Activated naive CD4-positive, alpha-beta T cell treated with anti-CD3 and anti-CD28 coated beads for 36 hours (primary cell): ENCODE measurements at regions of chr1 and their contacts with region 1.

Region 1: DNA sequence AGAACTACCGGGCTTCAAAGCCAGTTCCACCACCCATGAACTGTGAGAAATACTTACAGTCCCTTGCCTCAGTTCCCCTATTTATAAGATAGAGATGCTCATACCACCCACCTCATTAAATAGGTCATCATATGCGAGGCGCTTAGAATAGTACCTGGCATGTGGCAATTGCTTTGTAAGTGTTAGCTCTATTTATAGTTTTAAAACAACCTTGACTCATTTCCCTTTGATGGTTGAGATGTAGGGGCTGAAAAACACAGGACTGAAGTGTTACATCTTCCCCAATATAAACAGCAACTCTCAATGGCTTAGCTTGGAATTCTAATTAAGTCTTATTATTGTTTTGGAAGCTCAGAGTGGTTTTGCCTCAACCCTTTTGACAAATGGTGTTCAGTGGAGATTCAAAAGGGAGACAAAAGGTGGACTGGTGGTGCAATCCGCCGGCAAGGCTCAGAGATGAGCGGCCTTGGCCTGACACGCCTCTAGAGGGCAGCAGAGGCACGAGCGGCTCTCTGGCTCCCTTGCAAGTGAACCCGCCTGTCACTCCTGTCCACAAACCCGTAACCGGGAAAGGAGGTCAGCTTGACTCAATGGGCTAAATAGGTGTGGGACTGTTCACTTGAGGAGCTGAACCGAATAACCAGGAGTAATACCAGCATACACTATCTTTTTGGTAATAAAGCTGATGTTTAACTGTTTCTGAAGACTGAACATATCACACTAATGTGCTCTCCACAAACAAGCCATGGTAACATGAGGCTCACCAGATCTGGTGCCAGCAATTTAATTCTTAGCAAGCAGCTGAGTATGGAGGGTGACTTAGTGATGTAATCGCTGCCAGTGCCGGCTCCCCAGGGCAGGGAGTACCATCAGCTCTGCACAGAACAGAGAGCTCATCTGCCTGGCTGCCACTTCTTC is 19.5 kb upstream of the SMYD2 start:
- DNase-seq: peak; percentile 91
- H3K4me3 Mint-ChIP-seq: no peak overlapping the region
- H3K27ac Mint-ChIP-seq: no peak overlapping the region
- H3K4me1 Mint-ChIP-seq: peaks cover 11% of the 10 kb centered on the region
- H3K27me3 Mint-ChIP-seq: peaks cover 46% of the 10 kb centered on the region

Region 2: DNA sequence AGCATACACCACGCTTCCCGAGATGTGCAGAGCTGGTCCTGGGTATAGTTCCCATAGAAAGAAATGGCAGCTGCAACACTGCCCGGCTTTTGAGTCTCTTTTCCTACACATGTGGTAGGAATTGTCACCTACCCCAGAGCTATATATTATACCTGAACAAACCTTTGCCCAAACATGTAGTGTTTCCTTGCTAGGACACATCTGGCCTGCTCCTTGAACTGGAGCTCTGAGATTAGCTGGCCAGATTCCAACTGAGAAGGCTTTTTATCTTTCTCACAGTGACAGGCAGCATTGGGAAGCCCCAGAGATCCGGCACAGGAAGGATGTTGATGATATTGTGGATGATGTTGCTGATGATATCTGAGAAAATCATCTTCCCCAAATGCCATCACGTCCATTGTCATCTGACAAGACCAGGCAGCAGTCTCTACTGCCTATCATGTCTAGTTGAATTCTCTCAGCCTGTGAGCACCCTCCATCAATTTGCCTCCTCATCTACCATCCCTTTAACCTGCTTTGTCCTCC is 95.6 kb before region 1 on chr1:
- CTCF ChIA-PET with region 1: no interaction called
- intact Hi-C with region 1: no loop called
- DNase-seq: no peak
- H3K4me3 Mint-ChIP-seq: no peak overlapping the region
- H3K27ac Mint-ChIP-seq: no peak overlapping the region
- H3K4me1 Mint-ChIP-seq: no peaks in the 10 kb centered on the region
- H3K27me3 Mint-ChIP-seq: peaks cover 12% of the 10 kb centered on the region

Region 3: DNA sequence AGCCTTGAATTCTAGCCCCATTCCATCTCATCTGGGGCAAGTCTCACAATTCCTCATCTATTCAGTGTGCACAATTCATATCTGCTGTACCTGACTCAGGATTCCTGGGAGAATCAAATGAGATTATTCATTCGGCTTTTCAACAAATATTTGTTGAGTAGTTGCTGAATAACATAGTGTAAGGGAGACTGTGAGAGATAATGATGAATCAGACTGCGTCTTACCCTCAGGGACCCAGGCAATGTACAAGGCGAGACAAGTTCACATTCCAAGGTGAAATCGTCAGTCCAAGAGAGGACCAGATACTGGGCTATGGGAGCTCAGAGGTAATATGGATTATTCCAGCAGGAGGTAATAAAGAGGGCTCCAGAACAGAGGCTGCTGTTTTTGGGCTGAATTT is 48.3 kb before region 1 on chr1:
- CTCF ChIA-PET with region 1: interaction called, 18 read pairs
- intact Hi-C with region 1: loop called (anchors 1 kb)
- DNase-seq: no peak
- H3K4me3 Mint-ChIP-seq: no peak overlapping the region
- H3K27ac Mint-ChIP-seq: no peak overlapping the region
- H3K4me1 Mint-ChIP-seq: peaks cover 3% of the 10 kb centered on the region
- H3K27me3 Mint-ChIP-seq: peaks cover 2% of the 10 kb centered on the region

Region 4: DNA sequence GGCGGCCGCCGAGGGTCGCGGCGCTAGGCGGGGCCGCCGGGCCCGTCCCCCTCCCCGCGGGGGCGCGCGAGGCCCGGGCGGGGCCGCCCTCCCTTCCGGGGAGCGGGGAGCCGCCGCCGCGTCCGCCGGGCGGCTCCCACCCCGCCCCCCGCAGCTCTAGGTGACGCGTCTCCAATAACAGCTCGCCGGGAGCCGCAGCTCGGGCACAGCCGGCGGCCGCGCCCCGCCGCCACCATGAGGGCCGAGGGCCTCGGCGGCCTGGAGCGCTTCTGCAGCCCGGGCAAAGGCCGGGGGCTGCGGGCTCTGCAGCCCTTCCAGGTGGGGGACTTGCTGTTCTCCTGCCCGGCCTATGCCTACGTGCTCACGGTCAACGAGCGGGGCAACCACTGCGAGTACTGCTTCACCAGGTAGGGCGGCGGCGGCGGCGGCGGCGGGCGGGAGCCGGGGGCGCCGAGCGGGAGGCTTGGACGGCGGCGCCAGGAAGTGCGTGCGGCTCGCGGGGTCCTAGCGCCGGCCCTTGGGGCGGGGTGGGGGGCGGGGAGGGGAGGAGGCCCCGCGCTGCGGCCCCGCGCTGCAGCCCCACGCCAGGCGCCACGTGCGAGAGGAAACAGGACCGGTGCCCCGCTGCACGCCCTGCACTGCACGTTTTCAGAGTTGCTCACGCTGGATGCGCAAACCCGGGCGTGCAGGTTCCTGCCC is 19.7 kb after region 1 on chr1 and contains the start of gene SMYD2:
- CTCF ChIA-PET with region 1: interaction called, 25 read pairs
- intact Hi-C with region 1: loop called (anchors 1 kb)
- DNase-seq: peak; percentile 66
- H3K4me3 Mint-ChIP-seq: peak within 1 kb of the TSS; percentile 87
- H3K27ac Mint-ChIP-seq: peak within 1 kb of the TSS; percentile 74
- H3K4me1 Mint-ChIP-seq: peaks cover 40% of the 10 kb centered on the region
- H3K27me3 Mint-ChIP-seq: no peaks in the 10 kb centered on the region
- total RNA-seq, gene SMYD2: 33.4 to 38.4 TPM

Region 5: GRCh38 chr1:214310010-214310409 is 48.5 kb after region 1 on chr1:
- CTCF ChIA-PET with region 1: interaction called, 12 read pairs
- intact Hi-C with region 1: no loop called
- DNase-seq: peak; percentile 12
- H3K4me3 Mint-ChIP-seq: no peak overlapping the region
- H3K27ac Mint-ChIP-seq: no peak overlapping the region
- H3K4me1 Mint-ChIP-seq: peaks cover 30% of the 10 kb centered on the region
- H3K27me3 Mint-ChIP-seq: no peaks in the 10 kb centered on the region

Region 6: GRCh38 chr1:214321705-214322453 is 60.4 kb after region 1 on chr1:
- CTCF ChIA-PET with region 1: interaction called, 369 read pairs
- intact Hi-C with region 1: no loop called
- DNase-seq: no peak
- H3K4me3 Mint-ChIP-seq: no peak overlapping the region
- H3K27ac Mint-ChIP-seq: no peak overlapping the region
- H3K4me1 Mint-ChIP-seq: no peaks in the 10 kb centered on the region
- H3K27me3 Mint-ChIP-seq: no peaks in the 10 kb centered on the region

Region 7: GRCh38 chr1:214584805-214585766 is 323.6 kb after region 1 on chr1:
- CTCF ChIA-PET with region 1: interaction called, 15 read pairs
- intact Hi-C with region 1: loop called (anchors 1 kb)
- DNase-seq: no peak
- H3K4me3 Mint-ChIP-seq: no peak overlapping the region
- H3K27ac Mint-ChIP-seq: no peak overlapping the region
- H3K4me1 Mint-ChIP-seq: peaks cover 2% of the 10 kb centered on the region
- H3K27me3 Mint-ChIP-seq: no peaks in the 10 kb centered on the region

Region 8: DNA sequence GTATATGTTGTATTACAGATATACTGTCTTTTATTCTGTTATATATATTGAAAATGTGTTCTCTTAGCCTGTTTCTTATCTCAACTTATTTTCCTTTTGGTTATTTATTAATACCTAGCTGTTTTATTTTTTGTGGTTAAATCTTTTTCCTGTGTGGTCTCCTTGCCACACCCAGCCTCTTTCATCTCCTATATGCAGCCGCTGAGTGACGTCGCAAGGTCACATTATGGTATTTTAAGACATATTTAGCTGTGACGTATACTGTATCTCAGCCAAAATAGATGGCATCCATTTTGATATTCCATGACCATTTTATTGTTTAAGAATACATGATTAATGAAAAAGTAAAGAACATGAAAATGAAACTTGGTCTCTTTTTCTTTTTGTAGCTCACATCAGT is 370.6 kb after region 1 on chr1:
- CTCF ChIA-PET with region 1: no interaction called
- intact Hi-C with region 1: loop called (anchors 5 kb)
- DNase-seq: no peak
- H3K4me3 Mint-ChIP-seq: no peak overlapping the region
- H3K27ac Mint-ChIP-seq: no peak overlapping the region
- H3K4me1 Mint-ChIP-seq: peaks cover 22% of the 10 kb centered on the region
- H3K27me3 Mint-ChIP-seq: no peaks in the 10 kb centered on the region